Spleen (tissue), 13 donors: ENCODE measurements at regions of chr17 and their contacts with region 1.

Region 1: DNA sequence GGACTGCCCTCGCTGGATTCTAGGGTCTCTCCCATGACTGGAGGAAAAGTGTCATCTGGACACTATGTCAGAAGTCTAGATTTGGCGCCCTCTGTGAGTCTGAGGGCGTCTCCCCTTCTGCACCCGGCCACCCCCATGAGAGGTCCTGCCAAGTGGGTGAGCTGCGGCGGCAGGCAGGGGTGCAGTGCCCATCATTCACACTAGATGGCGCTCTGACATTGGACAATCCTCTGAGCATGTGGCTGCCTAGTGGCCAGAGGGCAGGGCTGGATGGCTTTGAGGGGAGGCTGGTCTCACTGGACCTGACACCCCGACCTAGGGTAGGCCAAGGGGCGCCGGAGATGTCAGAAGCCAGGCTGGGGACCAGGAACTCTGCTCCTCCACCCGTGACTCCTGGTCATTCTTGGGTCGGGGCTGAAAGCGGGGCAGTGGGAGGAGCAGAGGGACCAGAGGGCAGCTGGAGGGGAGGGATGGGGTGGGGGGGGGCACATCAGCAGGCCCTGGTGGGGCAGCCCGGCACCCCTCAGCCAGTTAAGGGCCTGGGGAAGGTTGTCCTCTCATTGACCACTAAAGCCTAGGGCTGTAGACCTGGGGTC is 28.0 kb downstream of the MRM1 start:
- DNase-seq: peak; percentile 91
- H3K4me3 ChIP-seq: no peak overlapping the region
- H3K27ac ChIP-seq: no peak overlapping the region
- H3K4me1 ChIP-seq: peaks cover 0 to 13% (median 5%) of the 10 kb centered on the region in 6 donors
- H3K27me3 ChIP-seq: peaks cover 0 to 5% (median 0%) of the 10 kb centered on the region in 7 donors
- CTCF ChIP-seq: peak; percentile 97 to 99 (median 98)
- POLR2A ChIP-seq: no peak

Region 2: GRCh38 chr17:37047631-37048104 is 418.3 kb after region 1 on chr17:
- intact Hi-C with region 1: loop called (anchors 2 kb)
- DNase-seq: peak; percentile 91
- H3K4me3 ChIP-seq: no peak overlapping the region
- H3K27ac ChIP-seq: no peak overlapping the region
- H3K4me1 ChIP-seq: peaks cover 0 to 16% (median 7%) of the 10 kb centered on the region in 6 donors
- H3K27me3 ChIP-seq: no peaks in the 10 kb centered on the region
- CTCF ChIP-seq: peak; percentile 62 to 87 (median 81)
- POLR2A ChIP-seq: no peak

Region 3: DNA sequence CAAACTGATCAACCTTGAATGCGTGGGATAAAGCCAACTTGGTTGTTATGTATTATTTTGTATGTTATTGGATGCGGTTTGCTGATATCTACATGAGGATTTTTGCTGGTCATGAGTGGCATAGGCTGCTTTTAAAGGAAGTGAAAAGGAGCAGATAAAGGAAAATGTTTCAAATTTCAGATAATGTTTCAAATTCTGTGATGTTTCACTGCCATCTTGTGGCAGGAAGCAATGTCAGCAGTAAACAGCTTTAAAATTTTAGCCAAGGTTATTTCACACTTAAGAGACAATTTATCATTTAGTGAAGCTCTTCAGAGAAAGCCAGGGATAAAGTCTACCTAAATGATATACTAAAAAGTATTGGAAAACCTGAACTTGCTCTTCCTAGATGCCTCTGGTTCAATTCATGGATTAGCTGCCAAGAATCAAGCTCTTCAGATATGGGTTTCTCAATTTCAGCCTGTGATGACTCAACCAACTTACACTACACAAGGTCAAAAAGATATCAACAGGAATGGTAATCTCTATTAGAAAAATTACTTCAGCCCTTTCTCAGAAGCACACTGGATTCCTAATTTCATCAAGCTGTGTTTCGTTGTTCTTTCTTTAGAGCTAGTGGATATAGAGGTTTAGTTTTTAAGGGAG is 610.5 kb after region 1 on chr17:
- intact Hi-C with region 1: loop called (anchors 5 kb)
- DNase-seq: no peak
- H3K4me3 ChIP-seq: no peak overlapping the region
- H3K27ac ChIP-seq: no peak overlapping the region
- H3K4me1 ChIP-seq: no peaks in the 10 kb centered on the region
- H3K27me3 ChIP-seq: no peaks in the 10 kb centered on the region
- CTCF ChIP-seq: peak; percentile 18 to 71 (median 56)
- POLR2A ChIP-seq: no peak